ENCODE measurements at regions of chr10 and their contacts with region 1.

Region 1: GRCh38 chr10:124388823-124389612 is 29.7 kb downstream of the OAT start:
- DNase-seq: peak; percentile 90
- H3K4me3 ChIP-seq: peak overlapping the region; percentile 51 to 64
- H3K27ac ChIP-seq: no peak overlapping the region
- H3K4me1 ChIP-seq: peaks cover 3% of the 10 kb centered on the region
- H3K27me3 ChIP-seq: no peaks in the 10 kb centered on the region
- CTCF ChIP-seq: peak; percentile 96 to 98 (median 97)
- POLR2A ChIP-seq: no peak

Region 2: DNA sequence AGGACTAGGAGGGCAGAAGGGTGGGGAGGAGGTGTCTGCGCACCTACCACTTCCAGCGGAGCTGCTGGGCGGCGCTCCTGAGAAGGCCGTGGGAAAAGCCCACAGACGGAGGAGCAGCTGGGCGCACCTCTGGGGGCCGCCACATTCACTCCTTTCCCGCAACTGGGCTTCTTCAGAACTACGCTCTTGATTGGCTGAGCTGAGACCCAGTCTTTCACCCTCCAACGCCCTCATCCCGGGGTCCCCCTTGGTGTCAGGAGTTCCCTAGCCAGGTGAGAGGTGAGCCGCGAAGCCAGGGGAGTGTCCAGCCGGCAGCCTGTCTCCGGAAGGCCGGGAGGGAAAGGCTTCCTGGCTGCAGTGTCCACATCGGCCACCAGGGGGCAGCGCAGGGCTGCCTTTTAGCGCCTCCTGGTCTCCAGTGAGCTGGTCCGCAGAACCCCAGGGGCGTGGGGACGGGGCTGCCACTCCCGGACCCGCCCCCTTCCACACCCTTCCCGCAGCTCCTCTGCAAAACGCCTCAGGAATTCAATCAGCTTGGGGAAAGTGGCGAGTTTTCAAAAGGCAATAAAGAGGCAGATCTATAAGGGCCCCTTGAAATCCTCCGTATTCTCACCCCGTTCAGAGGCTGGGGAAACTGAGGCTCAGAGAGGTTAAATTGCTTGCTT is 394.5 kb before region 1 on chr10:
- intact Hi-C with region 1: loop called (anchors 2 kb)
- DNase-seq: peak; percentile 91
- H3K4me3 ChIP-seq: peak overlapping the region; percentile 18 to 38
- H3K27ac ChIP-seq: no peak overlapping the region
- H3K4me1 ChIP-seq: peaks cover 15% of the 10 kb centered on the region
- H3K27me3 ChIP-seq: no peaks in the 10 kb centered on the region
- CTCF ChIP-seq: peak; percentile 99 to 100 (median 99)
- POLR2A ChIP-seq: no peak

Region 3: DNA sequence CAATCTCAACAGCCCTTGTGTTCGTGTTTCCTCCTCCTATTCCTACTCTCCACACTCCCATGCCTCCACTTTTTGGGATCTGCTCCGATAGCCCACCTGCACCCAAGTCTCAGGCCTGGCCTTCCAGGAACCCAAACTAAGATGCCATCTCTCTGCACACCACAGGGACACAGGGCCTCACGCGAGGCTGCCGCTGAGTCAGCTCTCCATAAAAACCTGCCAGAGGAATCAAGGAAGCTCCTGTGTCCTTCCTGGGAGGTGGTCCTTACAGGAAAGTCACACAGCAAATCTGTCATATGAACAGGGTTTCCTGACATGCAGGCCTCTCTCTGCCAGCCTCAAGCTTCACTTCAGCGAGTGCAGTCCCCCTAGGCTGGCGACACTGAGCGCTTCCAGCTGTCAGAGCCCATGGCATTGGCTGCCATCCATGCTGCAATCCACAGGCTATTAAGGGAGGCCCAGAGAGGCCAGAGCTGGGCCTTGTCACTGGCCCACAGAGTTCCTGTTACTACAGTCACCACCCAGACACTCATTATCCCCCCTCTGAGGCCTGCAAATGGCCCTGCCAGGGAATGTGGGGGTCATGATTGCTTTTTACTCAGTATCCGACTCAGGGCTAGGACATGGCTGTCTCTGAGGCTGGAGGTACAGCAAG is 121.7 kb before region 1 on chr10:
- intact Hi-C with region 1: no loop called
- DNase-seq: no peak
- H3K4me3 ChIP-seq: no peak overlapping the region
- H3K27ac ChIP-seq: no peak overlapping the region
- H3K4me1 ChIP-seq: no peaks in the 10 kb centered on the region
- H3K27me3 ChIP-seq: no peaks in the 10 kb centered on the region
- CTCF ChIP-seq: no peak
- POLR2A ChIP-seq: no peak

Region 4: DNA sequence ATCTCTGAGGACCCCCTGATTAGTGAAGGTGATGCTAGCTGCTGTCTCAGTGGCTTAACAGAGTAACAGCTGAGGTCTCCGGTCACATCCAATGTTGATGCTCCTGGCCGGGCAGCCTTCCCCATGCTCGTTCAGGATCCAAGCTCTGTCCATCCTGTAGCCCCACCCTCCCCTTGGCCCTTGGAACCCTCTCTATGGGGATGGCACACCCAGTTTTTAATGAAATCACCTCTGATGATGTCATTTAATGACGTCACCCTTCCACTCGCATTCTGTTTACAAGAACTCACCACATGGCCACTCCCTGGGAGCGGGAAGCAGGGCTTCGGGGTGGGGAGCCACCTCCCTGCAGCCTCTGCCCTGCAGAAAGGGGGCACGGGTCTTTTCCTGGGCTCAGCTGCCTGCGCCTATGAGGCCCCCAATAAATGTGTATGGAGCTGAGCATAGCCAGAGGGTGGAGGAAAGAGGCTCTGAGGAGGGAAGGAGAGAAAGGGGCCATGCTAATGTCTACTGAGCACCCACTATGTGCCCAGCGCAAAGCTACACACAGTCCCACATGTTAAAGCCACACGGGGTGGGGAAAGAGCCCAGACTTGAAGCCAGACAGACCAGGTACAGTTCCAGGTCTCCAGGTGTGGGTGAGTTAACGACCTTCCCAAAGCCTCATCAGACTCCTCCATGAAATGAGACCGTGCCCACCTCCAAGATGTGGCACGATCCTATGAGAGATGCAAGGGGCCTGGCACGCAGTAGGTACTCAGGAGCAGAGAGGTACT is 65.7 kb before region 1 on chr10:
- intact Hi-C with region 1: no loop called
- DNase-seq: no peak
- H3K4me3 ChIP-seq: no peak overlapping the region
- H3K27ac ChIP-seq: no peak overlapping the region
- H3K4me1 ChIP-seq: no peaks in the 10 kb centered on the region
- H3K27me3 ChIP-seq: no peaks in the 10 kb centered on the region
- CTCF ChIP-seq: no peak
- POLR2A ChIP-seq: no peak

Region 5: DNA sequence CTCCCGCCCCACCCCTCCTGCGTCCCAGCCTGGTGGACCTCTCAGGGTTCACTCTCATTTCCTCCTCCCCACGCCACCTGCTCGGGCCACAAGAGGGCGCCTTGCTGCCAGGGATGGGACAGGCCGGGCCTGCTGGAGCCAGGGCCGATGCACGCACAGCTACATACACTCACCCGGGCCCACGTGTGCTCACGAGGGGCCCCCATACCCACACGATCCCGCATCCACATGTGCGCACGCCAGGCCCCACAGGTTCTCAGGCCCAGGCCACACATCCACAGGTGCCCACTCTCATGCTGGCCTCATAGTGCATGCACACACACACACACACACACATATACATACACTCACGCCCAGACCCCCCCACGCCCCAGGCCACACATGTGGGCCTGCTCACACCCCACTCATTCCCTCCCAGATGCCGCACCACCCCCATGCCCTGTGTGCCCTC is 141.2 kb after region 1 on chr10:
- intact Hi-C with region 1: no loop called
- DNase-seq: peak; percentile 90
- H3K4me3 ChIP-seq: no peak overlapping the region
- H3K27ac ChIP-seq: no peak overlapping the region
- H3K4me1 ChIP-seq: peaks cover 35% of the 10 kb centered on the region
- H3K27me3 ChIP-seq: no peaks in the 10 kb centered on the region
- CTCF ChIP-seq: peak; percentile 62 to 85 (median 83)
- POLR2A ChIP-seq: no peak